Activated naive CD4-positive, alpha-beta T cell treated with anti-CD3 and anti-CD28 coated beads for 36 hours (primary cell): ENCODE measurements at regions of chr5 and their contacts with region 1.

Region 1: DNA sequence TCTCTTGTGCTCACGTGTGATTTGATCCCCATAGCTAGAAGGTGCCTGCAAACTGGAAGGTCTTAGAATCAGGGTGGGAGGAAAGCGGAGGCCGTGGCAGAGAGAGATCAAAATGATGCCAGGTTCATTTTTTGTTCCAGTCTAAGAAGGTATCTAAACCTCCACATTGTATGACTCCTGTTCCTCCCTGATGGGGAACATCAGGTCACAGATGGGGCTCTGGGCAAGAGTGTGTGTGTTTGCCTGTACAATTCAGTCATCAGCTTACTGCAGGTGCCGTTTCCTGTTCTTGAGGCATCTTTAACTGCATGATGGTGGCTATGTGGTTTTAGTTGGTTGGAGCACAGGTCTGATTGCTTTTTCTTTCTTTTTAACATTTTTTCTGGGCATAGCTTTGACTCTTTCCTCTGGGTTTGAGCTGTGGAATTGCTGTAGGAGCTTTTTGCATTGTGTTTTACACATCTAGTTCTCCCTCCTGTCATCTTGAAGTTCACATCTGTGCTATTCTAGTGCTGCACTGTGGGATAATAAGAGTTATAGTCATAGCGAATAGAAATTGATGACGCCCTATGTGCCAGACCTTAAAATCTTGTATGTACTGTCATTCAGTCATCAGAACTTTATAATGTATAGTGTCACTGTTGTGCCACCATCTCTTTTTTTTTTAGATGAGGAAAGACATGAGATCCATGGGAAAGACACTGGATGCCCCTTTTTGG is 30.8 kb downstream of the ARHGAP26 start:
- DNase-seq: peak; percentile 77
- H3K4me3 Mint-ChIP-seq: peak overlapping the region; percentile 64
- H3K27ac Mint-ChIP-seq: peak overlapping the region; percentile 90
- H3K4me1 Mint-ChIP-seq: peaks cover 61% of the 10 kb centered on the region
- H3K27me3 Mint-ChIP-seq: no peaks in the 10 kb centered on the region

Region 2: GRCh38 chr5:142748568-142749249 is 52.2 kb before region 1 on chr5:
- CTCF ChIA-PET with region 1: interaction called, 6 read pairs
- intact Hi-C with region 1: loop called (anchors 1 kb)
- DNase-seq: peak; percentile 76
- H3K4me3 Mint-ChIP-seq: no peak overlapping the region
- H3K27ac Mint-ChIP-seq: no peak overlapping the region
- H3K4me1 Mint-ChIP-seq: peaks cover 13% of the 10 kb centered on the region
- H3K27me3 Mint-ChIP-seq: no peaks in the 10 kb centered on the region

Region 3: DNA sequence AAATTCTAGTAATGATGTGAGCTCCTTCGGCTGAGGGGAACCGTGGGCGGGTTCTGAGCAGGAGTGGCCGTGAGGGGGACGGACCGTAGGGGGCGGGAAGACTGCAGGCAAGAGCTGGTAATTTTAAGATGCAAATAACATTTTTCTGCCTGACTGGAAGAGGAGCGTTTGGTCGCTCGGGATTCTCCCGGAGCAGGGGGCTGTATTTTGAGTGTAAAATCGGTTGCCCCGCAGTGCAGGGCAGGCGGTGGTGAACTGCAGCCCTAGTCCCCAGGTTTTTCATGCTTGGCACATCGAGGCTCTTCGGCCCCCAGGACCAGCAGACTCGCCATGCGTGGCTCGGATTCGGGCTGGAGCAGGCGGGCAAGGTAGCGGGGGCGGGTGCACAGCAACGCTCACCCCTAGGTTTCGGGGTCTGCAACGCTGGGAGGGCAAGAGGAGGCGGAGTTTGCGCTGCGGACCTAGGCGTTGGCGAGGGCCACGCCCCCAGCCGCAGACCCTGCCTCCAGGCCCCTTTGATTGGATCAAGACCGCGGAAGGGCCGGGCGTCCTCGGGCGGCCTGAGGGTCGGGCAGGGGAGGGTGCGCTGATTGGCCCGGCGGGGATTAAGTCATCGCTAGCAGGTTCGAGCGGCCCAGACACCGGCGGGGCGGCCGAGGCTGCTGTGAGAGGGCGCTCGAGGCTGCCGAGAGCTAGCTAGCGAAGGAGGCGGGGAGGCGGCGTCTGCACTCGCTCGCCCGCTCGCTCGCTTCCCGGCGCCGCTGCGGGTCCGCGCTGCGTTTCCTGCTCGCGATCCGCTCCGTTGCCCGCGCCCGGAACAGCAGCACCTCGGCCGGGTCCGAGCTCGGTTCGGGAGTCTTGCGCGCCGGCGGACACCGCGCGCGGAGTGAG is 30.9 kb before region 1 on chr5 and contains the start of gene ARHGAP26:
- CTCF ChIA-PET with region 1: interaction called, 19 read pairs
- intact Hi-C with region 1: loop called (anchors 1 kb)
- DNase-seq: peak; percentile 94
- H3K4me3 Mint-ChIP-seq: peak within 1 kb of the TSS; percentile 95
- H3K27ac Mint-ChIP-seq: peak within 1 kb of the TSS; percentile 81
- H3K4me1 Mint-ChIP-seq: peaks cover 37% of the 10 kb centered on the region
- H3K27me3 Mint-ChIP-seq: no peaks in the 10 kb centered on the region
- total RNA-seq, gene ARHGAP26: 17.0 to 19.5 TPM

Region 4: DNA sequence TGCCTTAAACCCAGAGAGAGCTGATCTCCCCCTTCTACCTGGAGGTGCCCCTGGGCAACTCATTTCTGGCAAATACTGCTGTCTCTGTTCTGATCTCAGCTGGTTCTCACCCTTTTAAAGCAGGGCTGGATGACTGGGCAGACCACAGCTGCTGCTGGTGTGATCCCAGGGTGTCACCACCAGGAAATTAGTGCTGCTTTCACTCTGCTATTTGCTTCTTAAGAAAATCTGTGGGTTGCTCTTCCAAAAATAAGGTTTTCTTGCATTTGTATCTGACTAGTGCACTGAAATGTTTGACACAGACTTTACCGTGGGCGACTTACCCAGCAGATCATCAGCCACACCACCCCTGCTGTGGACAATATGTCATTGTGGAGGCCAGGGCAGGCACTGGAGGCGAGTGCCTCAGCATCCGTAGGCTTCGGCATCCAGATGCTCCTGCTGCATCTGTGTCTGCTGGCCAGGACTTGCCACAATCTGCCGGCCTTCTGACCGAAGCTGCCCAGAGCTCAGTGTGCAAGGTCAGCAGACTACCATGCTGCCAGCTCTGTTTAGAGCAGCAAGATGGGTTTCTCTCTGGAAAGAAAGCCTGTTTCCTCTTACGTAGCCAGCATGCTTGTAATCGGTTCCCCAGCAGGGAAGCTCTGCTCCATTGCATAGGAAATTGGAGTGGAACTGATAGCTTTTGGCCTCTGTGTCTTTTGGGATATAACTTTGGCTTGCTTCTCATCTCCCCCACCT is 17.2 kb before region 1 on chr5:
- CTCF ChIA-PET with region 1: interaction called, 17 read pairs
- intact Hi-C with region 1: loop called (anchors 1 kb)
- DNase-seq: peak; percentile 88
- H3K4me3 Mint-ChIP-seq: no peak overlapping the region
- H3K27ac Mint-ChIP-seq: peak overlapping the region; percentile 34
- H3K4me1 Mint-ChIP-seq: peaks cover 62% of the 10 kb centered on the region
- H3K27me3 Mint-ChIP-seq: no peaks in the 10 kb centered on the region

Region 5: DNA sequence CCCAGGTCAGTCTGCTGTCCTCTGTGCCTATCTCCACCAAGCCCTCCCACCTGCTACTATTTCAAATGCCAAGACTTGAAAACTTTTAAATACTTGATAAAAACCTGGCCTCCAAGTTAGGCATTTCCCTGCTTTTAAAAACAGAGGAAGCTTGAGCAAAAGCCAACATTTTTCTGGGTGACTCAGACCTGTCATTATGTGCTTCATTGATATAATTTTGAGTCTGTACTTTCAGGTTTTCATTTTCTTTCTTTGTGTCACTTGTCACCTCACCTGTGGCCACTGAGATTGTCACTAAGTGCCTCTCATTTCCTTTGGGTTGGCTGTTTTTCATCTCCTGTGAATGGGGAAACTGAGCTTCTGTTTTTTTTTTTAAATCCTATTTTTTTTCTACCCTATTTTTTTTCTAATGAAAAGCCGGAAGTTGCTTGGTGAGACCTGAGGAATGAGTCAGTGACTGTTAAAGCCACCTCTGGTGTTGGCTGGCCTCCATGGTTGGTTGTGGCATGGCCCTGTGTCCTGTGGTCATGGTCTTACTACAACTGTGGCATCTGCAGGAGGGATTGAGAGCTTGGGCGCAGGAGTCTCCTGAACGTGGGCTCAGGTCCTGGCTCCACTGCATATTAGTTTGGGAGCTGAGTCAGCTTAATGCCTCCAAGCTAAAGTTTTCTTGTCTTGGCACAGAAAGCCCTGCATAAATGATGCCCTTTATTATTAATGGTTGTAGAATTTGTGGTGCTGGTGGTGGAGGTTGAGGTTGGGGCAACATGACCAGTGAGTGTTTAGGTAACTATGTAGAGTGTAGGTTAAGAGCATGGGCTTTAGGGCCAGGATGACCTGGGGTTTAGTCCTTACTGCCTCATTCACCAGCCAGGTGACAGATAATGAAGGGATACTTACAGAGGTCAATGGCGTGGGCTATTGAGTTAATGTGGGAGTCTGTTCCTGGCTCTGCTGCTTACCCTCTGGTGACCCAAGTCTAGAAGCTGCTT is 26.1 kb after region 1 on chr5:
- CTCF ChIA-PET with region 1: interaction called, 5 read pairs
- intact Hi-C with region 1: loop called (anchors 1 kb)
- DNase-seq: peak; percentile 67
- H3K4me3 Mint-ChIP-seq: no peak overlapping the region
- H3K27ac Mint-ChIP-seq: peak overlapping the region; percentile 76
- H3K4me1 Mint-ChIP-seq: peaks cover 80% of the 10 kb centered on the region
- H3K27me3 Mint-ChIP-seq: no peaks in the 10 kb centered on the region

Region 6: DNA sequence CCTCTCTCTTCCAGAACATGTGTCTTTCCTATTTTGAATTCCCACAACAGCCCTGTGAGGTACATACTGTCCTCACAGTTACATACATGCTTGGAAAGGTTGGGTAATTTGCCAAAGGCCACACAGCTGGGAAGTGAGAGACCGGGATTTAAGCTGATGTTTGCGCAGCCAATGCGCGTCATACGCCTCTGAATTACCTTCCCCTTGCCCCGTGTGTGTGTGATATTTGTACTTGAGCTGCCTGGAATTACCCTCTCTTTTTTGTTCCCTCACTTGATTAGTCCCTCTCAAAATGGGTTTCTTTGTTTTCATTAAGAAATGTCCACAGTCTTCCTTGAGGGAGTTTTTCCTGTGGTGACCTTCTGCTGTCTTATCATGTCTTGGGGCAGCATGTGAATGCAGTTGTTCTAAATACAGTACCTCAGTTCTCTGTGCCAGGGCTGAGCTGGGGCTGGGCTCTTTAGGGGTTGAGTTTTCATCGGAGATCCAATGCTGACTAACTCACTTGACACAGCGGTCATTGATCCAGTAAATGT is 63.9 kb after region 1 on chr5:
- CTCF ChIA-PET with region 1: interaction called, 11 read pairs
- intact Hi-C with region 1: loop called (anchors 1 kb)
- DNase-seq: no peak
- H3K4me3 Mint-ChIP-seq: no peak overlapping the region
- H3K27ac Mint-ChIP-seq: peak overlapping the region; percentile 89
- H3K4me1 Mint-ChIP-seq: peaks cover 30% of the 10 kb centered on the region
- H3K27me3 Mint-ChIP-seq: no peaks in the 10 kb centered on the region

Region 7: DNA sequence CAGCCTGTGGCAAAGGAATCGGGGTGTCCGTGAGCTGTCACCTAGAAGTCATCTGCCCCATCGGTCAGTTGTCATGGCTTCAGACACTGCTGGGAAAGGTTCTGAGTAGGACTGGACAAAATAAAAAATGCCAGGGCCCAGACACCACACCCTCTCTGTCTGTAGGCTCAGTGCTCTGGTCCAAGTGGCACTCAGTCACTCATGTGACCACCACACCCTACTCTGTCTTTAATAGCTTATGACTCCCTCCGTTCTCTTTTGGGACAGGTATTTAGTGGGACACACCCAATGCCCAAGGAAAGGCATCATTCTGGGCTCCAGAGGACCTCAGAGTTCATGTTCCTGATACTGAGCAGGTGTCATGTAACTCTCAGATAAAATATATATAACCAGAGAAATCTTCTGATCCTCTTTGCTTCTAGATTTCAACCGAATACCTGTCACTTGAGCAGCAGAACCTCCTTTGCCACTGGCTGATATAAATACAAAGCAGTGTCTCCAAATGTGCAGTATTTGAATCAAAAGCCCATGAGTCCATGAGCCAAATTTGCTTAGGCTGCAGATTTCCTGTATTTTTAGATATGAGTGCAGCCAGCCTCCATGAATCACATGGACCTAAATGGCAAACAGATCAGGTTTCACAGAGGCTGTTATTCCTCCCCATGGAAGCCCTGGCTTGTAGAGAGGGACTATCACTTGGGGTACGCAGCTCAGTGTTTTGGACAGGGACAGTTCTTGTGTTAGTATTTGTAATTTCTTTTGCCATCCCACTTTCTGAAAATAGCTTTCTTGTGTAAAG is 241.2 kb after region 1 on chr5:
- CTCF ChIA-PET with region 1: no interaction called
- intact Hi-C with region 1: no loop called
- DNase-seq: no peak
- H3K4me3 Mint-ChIP-seq: no peak overlapping the region
- H3K27ac Mint-ChIP-seq: no peak overlapping the region
- H3K4me1 Mint-ChIP-seq: peaks cover 17% of the 10 kb centered on the region
- H3K27me3 Mint-ChIP-seq: no peaks in the 10 kb centered on the region